CD4-positive, alpha-beta T cell (primary cell): ENCODE measurements at regions of chr1 and their contacts with region 1.

Region 1: DNA sequence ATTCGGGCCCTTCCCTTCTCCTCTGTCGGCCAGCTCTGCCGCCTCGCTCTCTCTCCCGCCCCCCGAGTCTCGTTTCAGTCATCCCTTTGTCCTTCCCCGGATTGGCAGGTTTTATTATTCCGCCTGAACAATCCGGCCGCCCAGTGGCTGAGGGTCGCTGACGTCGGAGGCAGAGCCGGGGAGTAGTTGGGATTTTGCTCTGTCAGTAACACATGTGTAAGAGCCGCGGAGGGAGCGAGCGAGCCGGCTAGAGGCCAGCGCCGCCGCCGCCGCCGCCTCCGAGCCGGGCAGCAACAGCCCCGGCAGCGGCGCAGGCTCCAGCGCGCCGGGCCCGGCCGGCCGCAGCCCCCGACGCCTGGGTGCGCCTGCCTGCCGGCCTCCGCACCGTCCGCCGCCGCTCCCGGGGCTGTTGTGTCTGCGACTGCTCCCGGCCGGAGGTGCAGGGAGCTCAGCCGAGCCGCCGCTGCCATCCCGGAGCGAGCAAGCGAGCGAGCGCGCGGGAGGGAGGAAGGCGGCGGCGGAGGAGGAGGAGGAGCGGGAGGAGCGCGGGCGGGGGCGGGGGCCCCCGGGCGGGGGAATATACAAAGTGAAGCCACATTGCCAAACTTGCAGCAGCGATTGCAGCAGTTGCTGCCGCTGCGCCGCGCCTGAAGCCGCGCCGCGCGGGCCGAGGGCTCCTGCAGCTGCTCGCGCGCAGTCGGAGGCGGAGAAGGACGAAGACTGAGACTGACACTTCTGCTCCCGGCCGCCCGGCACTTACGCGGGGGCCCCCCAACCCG is at the start of gene LMO4:
- DNase-seq: peak; percentile 51 to 92 (median 68)
- ATAC-seq: peak; percentile 56
- H3K4me3 ChIP-seq: peak within 1 kb of the TSS; percentile 81
- H3K4me3 Mint-ChIP-seq: peak within 1 kb of the TSS; percentile 98
- H3K27ac ChIP-seq: peak within 1 kb of the TSS; percentile 49 to 51
- H3K27ac Mint-ChIP-seq: peak within 1 kb of the TSS; percentile 88
- H3K4me1 ChIP-seq: peaks cover 34% of the 10 kb centered on the region
- H3K4me1 Mint-ChIP-seq: peaks cover 56% of the 10 kb centered on the region
- H3K27me3 ChIP-seq: peaks cover 0 to 7% of the 10 kb centered on the region in 2 experiments
- H3K27me3 Mint-ChIP-seq: peaks cover 21% of the 10 kb centered on the region
- CTCF ChIP-seq: no peak
- total RNA-seq, gene LMO4: 16.0 to 18.2 TPM

Region 2: GRCh38 chr1:86389307-86389706 is 939.2 kb before region 1 on chr1:
- CTCF ChIA-PET with region 1: no interaction called
- POLR2A ChIA-PET with region 1: no interaction called
- intact Hi-C with region 1: loop called in 1 of 2 experiments (anchors 5 kb)
- DNase-seq: peak in 3 of 14 experiments; percentile 50 to 70 (median 54)
- ATAC-seq: peak; percentile 80
- H3K4me3 ChIP-seq: peak overlapping the region; percentile 37
- H3K4me3 Mint-ChIP-seq: peak overlapping the region; percentile 77
- H3K27ac ChIP-seq: peak overlapping the region; percentile 8 to 73
- H3K27ac Mint-ChIP-seq: peak overlapping the region; percentile 78
- H3K4me1 ChIP-seq: peaks cover 4% of the 10 kb centered on the region
- H3K4me1 Mint-ChIP-seq: peaks cover 68% of the 10 kb centered on the region
- H3K27me3 ChIP-seq: no peaks in the 10 kb centered on the region
- H3K27me3 Mint-ChIP-seq: no peaks in the 10 kb centered on the region
- CTCF ChIP-seq: no peak

Region 3: DNA sequence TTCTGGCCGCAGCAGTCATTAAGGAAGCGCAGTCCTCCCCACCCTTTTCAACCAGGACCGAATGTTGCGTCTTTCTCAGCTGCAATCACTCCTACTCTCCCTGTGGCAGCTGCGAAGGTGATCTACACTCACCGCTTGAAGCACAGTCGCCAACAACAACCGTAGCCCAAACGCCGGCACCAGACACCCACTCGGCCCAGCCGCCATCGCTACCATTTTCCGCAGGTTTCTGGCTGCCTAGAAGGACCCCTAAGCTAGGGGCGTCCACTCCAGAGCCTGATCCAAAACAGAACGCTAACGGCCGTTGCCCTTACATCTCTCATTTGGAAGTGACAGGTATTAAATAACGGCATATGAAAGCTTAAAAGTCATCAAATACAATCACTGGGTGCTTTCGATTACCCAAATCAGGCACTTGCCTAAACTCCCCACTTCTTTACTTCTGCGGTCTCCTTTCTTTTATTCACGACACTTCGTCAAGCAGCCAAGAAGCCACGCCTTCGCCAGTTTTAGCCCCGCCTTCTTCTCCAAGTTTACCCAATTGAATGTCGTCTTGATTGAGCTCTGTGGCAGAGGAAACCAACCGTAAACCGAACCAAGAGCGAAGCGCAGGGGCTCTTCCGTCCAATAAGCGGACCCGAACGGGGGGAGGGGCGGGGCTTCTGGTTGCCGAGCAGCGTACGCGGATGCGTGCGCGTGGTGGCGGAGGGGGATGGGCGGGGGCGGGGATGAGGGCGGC is 414.4 kb before region 1 on chr1 and contains the start of gene SELENOF:
- CTCF ChIA-PET with region 1: no interaction called
- POLR2A ChIA-PET with region 1: interaction called, 13 read pairs
- intact Hi-C with region 1: loop called (anchors 5 to 10 kb)
- DNase-seq: peak; percentile 98 to 100 (median 99)
- ATAC-seq: peak; percentile 88
- H3K4me3 ChIP-seq: peak within 1 kb of the TSS; percentile 90
- H3K4me3 Mint-ChIP-seq: no peak within 1 kb of the TSS
- H3K27ac ChIP-seq: peak within 1 kb of the TSS; percentile 95 to 96
- H3K27ac Mint-ChIP-seq: no peak within 1 kb of the TSS
- H3K4me1 ChIP-seq: peaks cover 25% of the 10 kb centered on the region
- H3K4me1 Mint-ChIP-seq: peaks cover 53% of the 10 kb centered on the region
- H3K27me3 ChIP-seq: no peaks in the 10 kb centered on the region
- H3K27me3 Mint-ChIP-seq: no peaks in the 10 kb centered on the region
- CTCF ChIP-seq: no peak
- total RNA-seq, gene SELENOF: 74.1 to 74.9 TPM

Region 4: GRCh38 chr1:87402241-87403002 is 74.0 kb after region 1 on chr1:
- CTCF ChIA-PET with region 1: no interaction called
- POLR2A ChIA-PET with region 1: interaction called, 5 read pairs
- intact Hi-C with region 1: loop called in 1 of 2 experiments (anchors 5 kb)
- DNase-seq: no peak
- ATAC-seq: no peak
- H3K4me3 ChIP-seq: no peak overlapping the region
- H3K4me3 Mint-ChIP-seq: no peak overlapping the region
- H3K27ac ChIP-seq: no peak overlapping the region
- H3K27ac Mint-ChIP-seq: no peak overlapping the region
- H3K4me1 ChIP-seq: no peaks in the 10 kb centered on the region
- H3K4me1 Mint-ChIP-seq: peaks cover 13% of the 10 kb centered on the region
- H3K27me3 ChIP-seq: no peaks in the 10 kb centered on the region
- H3K27me3 Mint-ChIP-seq: no peaks in the 10 kb centered on the region
- CTCF ChIP-seq: no peak

Region 5: DNA sequence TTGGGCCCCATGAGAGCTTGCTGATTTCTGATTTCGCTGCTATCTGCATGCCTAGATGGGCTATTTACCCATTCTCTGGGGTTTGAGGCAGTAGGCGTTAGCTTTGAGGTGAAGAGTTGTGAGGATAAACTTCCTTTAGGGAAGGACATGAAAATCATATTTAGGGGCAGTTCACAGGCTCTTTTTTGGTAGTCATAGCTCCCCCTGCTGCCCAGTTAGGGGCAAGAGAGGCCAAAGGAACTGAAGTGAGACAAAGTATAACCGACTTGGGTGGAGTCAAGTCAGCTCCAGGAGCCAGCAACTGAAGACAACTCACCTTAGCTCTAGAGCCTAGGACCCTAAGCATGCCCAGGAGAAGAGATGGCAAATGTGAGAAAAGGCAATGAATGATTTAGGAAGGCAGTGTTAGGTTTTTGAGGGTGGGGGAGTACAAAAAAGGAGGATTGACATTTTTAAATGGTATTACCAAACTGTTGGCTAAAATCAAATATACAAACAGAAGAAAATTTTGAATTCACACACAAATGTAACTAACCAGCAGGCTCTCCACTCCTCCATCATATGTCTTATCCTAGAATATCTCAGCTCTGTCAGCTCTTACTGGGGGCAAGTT is 625.4 kb after region 1 on chr1:
- CTCF ChIA-PET with region 1: interaction called, 4 read pairs
- POLR2A ChIA-PET with region 1: interaction called, 4 read pairs
- intact Hi-C with region 1: loop called (anchors 1 to 10 kb)
- DNase-seq: peak; percentile 7 to 69 (median 32)
- ATAC-seq: no peak
- H3K4me3 ChIP-seq: no peak overlapping the region
- H3K4me3 Mint-ChIP-seq: no peak overlapping the region
- H3K27ac ChIP-seq: no peak overlapping the region
- H3K27ac Mint-ChIP-seq: no peak overlapping the region
- H3K4me1 ChIP-seq: no peaks in the 10 kb centered on the region
- H3K4me1 Mint-ChIP-seq: no peaks in the 10 kb centered on the region
- H3K27me3 ChIP-seq: no peaks in the 10 kb centered on the region
- H3K27me3 Mint-ChIP-seq: peaks cover 28% of the 10 kb centered on the region
- CTCF ChIP-seq: peak; percentile 70

Region 6: DNA sequence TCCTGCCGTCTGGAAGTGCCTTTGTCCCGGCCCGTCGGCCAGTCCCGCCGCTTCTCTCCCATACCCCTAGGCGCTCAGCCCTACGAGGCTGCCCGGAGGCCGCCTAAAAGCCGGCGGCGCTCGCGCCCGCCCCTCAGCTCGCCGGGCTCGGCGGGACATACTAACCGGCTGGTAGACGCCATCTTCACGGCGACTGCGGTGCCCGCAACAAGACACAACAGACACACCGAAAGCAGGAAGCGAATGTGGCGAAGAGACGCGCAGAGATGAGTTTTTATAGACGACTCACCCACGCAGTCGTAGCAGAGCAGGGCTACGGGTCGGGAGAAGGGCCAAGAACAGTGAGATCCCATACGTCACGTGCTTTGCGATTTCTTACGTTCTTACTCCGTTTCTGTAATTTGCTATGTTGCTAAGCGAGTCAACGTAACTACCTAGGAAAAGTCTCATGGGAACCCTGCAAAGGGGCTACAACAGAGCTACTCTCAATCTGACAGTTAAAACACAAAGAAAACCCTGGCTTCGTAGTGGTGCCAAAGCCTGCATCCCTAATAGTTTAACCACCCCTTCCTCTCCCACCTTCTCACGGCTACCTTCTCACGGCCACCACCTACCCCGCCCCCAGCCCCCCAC is 1563.0 kb after region 1 on chr1 and contains the start of gene GTF2B:
- CTCF ChIA-PET with region 1: no interaction called
- POLR2A ChIA-PET with region 1: no interaction called
- intact Hi-C with region 1: loop called in 1 of 2 experiments (anchors 10 kb)
- DNase-seq: peak; percentile 88 to 98 (median 92)
- ATAC-seq: peak; percentile 85
- H3K4me3 ChIP-seq: peak within 1 kb of the TSS; percentile 86
- H3K4me3 Mint-ChIP-seq: peak within 1 kb of the TSS; percentile 96
- H3K27ac ChIP-seq: peak within 1 kb of the TSS; percentile 90 to 93
- H3K27ac Mint-ChIP-seq: peak within 1 kb of the TSS; percentile 91
- H3K4me1 ChIP-seq: peaks cover 18% of the 10 kb centered on the region
- H3K4me1 Mint-ChIP-seq: peaks cover 49% of the 10 kb centered on the region
- H3K27me3 ChIP-seq: no peaks in the 10 kb centered on the region
- H3K27me3 Mint-ChIP-seq: no peaks in the 10 kb centered on the region
- CTCF ChIP-seq: no peak
- total RNA-seq, gene GTF2B: 82.6 to 86.4 TPM